CD14-positive monocyte (primary cell): ENCODE measurements at regions of chr16 and their contacts with region 1.

Region 1: GRCh38 chr16:67084345-67085028 is 25.3 kb upstream of the PHAF1 start:
- DNase-seq: peak in 1 of 3 donors; percentile 4
- H3K4me3 ChIP-seq: no peak overlapping the region
- H3K4me3 Mint-ChIP-seq: no peak overlapping the region
- H3K27ac ChIP-seq: peak overlapping the region in 1 of 2 donors; percentile 7
- H3K27ac Mint-ChIP-seq: peak overlapping the region in 1 of 7 donors; percentile 1
- H3K4me1 ChIP-seq: peaks cover 2 to 4% of the 10 kb centered on the region in 2 donors
- H3K4me1 Mint-ChIP-seq: peaks cover 6% of the 10 kb centered on the region
- H3K27me3 ChIP-seq: no peaks in the 10 kb centered on the region
- H3K27me3 Mint-ChIP-seq: no peaks in the 10 kb centered on the region
- CTCF ChIP-seq: no peak

Region 2: GRCh38 chr16:67115639-67116038 is 31.2 kb after region 1 on chr16:
- intact Hi-C with region 1: no loop called
- DNase-seq: peak; percentile 71 to 90 (median 85)
- H3K4me3 ChIP-seq: peak overlapping the region in 1 of 3 experiments; percentile 54
- H3K4me3 Mint-ChIP-seq: peak overlapping the region in 1 of 2 donors; percentile 5
- H3K27ac ChIP-seq: peak overlapping the region; percentile 56 to 96
- H3K27ac Mint-ChIP-seq: peak overlapping the region; percentile 90 to 97 (median 96)
- H3K4me1 ChIP-seq: peaks cover 64 to 66% of the 10 kb centered on the region in 2 donors
- H3K4me1 Mint-ChIP-seq: peaks cover 66% of the 10 kb centered on the region
- H3K27me3 ChIP-seq: no peaks in the 10 kb centered on the region
- H3K27me3 Mint-ChIP-seq: no peaks in the 10 kb centered on the region
- CTCF ChIP-seq: no peak

Region 3: GRCh38 chr16:67137605-67138004 is 53.1 kb after region 1 on chr16:
- intact Hi-C with region 1: loop called in 1 of 2 experiments (anchors 10 kb)
- DNase-seq: no peak
- H3K4me3 ChIP-seq: no peak overlapping the region
- H3K4me3 Mint-ChIP-seq: no peak overlapping the region
- H3K27ac ChIP-seq: no peak overlapping the region
- H3K27ac Mint-ChIP-seq: no peak overlapping the region
- H3K4me1 ChIP-seq: no peaks in the 10 kb centered on the region
- H3K4me1 Mint-ChIP-seq: no peaks in the 10 kb centered on the region
- H3K27me3 ChIP-seq: no peaks in the 10 kb centered on the region
- H3K27me3 Mint-ChIP-seq: peaks cover 0 to 2% (median 0%) of the 10 kb centered on the region in 3 donors
- CTCF ChIP-seq: no peak